ENCODE measurements at regions of chr16 and their contacts with region 1.

Region 1: DNA sequence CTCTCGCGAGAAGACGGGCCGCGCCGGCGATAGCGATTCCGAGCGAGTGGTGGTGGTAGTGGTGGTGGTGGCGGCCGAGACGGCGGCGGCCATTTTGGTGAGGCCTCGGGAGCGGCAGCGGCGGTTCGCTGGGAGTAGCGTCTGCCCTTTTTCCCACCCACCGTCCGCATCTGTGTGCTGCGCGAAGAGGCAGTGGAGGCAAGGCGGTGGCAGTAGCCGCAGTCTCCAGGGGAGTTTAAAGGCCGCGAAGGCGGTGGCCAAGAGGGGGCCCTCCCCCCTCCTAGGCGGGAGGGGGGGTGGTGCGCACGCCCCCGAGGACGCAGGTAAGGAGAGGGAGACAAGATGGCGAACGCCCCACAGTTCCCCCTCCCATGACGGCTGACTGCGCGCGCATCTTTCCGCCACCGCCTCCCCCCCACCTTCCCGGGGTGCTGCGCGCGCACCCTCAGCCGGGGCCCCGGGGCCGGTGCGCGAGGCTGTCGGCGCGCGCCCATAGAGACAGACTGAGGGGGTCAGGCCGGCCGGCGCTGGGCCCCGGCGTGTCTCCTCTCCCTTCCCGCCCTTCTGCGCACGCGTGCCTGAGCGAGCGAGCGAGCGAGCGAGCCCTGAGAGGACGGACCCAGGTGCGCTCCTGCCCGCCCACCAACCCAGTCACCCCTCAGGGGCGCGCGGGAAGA is 694 bp upstream of the SRCAP start:
- DNase-seq: peak; percentile 97 to 99
- ATAC-seq: peak; percentile 72 to 88 (median 75)
- H3K4me3 ChIP-seq: peak overlapping the region; percentile 89
- H3K4me3 Mint-ChIP-seq: peak overlapping the region; percentile 94
- H3K27ac ChIP-seq: peak overlapping the region; percentile 99
- H3K27ac Mint-ChIP-seq: peak overlapping the region; percentile 98 to 100
- H3K4me1 ChIP-seq: peaks cover 26% of the 10 kb centered on the region
- H3K4me1 Mint-ChIP-seq: peaks cover 36 to 46% of the 10 kb centered on the region in 2 donors
- H3K27me3 ChIP-seq: no peaks in the 10 kb centered on the region
- H3K27me3 Mint-ChIP-seq: no peaks in the 10 kb centered on the region
- CTCF ChIP-seq: no peak

Region 2: DNA sequence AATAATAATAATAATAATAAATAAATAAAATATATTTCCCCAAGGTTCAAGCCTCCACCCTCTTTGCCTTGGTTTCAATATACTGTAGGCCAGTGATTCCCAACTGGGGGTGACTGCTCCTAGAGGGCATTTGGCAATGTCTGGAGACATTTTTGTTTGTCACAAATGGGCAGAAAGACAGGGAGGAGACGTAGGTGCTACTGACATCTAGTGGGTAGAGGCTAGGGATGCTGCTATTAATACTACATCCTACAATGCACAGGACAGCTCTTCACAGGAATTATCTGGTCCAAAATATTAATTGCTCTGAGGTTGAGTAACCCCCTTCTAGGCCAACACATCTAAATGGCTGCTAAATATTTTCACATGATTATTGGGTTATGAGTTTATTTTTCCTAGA is 60.3 kb before region 1 on chr16:
- intact Hi-C with region 1: loop called (anchors 10 kb)
- DNase-seq: peak in 1 of 2 donors; percentile 70
- ATAC-seq: no peak
- H3K4me3 ChIP-seq: no peak overlapping the region
- H3K4me3 Mint-ChIP-seq: no peak overlapping the region
- H3K27ac ChIP-seq: no peak overlapping the region
- H3K27ac Mint-ChIP-seq: no peak overlapping the region
- H3K4me1 ChIP-seq: peaks cover 17% of the 10 kb centered on the region
- H3K4me1 Mint-ChIP-seq: peaks cover 0 to 17% of the 10 kb centered on the region in 2 donors
- H3K27me3 ChIP-seq: no peaks in the 10 kb centered on the region
- H3K27me3 Mint-ChIP-seq: no peaks in the 10 kb centered on the region
- CTCF ChIP-seq: no peak

Region 3: DNA sequence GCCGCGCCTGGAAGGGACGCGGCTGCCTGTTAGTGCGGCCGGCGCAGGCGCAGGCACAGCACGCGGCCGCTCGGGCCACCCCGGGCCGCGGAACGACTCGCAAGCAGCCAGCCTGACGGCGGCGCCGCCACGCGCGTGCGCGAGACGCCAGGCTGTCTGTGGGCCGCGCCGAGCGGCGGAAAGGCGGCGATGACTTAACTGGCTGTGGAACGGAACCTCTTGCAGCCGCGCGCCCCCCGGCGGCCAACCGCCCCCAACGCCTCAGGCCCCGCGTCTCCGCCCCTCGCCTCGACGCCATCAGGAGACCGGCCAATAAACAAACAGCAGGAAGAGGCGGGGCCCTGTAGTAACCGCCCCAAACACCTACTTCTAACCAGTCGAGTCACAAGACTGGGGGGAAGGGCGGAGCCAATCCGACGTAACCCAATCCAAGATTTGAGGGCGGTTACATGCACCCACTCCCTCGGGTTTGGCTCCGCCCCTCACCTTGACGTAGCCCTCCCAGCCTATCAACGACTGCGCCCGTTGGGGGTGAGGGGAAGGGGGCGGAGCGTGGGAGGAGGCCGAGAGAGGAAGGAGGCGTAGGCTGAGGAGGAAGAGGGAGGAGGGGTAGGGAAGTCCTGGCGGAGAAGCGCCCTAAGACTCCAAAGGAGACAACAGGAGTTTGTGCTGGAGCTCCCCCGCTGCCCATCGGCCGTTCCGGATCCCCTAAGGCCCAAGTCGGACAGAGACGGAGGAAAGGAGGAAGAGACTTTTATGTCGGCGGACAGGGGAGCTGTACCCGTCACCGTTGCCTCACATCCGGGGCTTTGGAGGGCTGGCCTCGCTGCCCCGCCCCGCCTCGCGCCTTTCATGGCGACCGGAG is 40.2 kb before region 1 on chr16 and contains the start of gene FBRS:
- intact Hi-C with region 1: loop called (anchors 1 kb)
- DNase-seq: peak; percentile 99 to 100
- ATAC-seq: peak; percentile 72 to 86 (median 74)
- H3K4me3 ChIP-seq: peak within 1 kb of the TSS; percentile 97
- H3K4me3 Mint-ChIP-seq: peak within 1 kb of the TSS; percentile 98
- H3K27ac ChIP-seq: peak within 1 kb of the TSS; percentile 99
- H3K27ac Mint-ChIP-seq: peak within 1 kb of the TSS; percentile 98 to 99
- H3K4me1 ChIP-seq: peaks cover 39% of the 10 kb centered on the region
- H3K4me1 Mint-ChIP-seq: peaks cover 38 to 52% of the 10 kb centered on the region in 2 donors
- H3K27me3 ChIP-seq: no peaks in the 10 kb centered on the region
- H3K27me3 Mint-ChIP-seq: no peaks in the 10 kb centered on the region
- CTCF ChIP-seq: peak; percentile 77
- total RNA-seq, gene FBRS: 158 to 182 (median 172) TPM

Region 4: GRCh38 chr16:30669896-30670797 is 28.1 kb before region 1 on chr16:
- intact Hi-C with region 1: no loop called
- DNase-seq: peak in 1 of 2 donors; percentile 17
- ATAC-seq: peak in 2 of 3 donors; percentile 7 to 22
- H3K4me3 ChIP-seq: no peak overlapping the region
- H3K4me3 Mint-ChIP-seq: no peak overlapping the region
- H3K27ac ChIP-seq: no peak overlapping the region
- H3K27ac Mint-ChIP-seq: peak overlapping the region in 1 of 2 donors; percentile 38
- H3K4me1 ChIP-seq: peaks cover 2% of the 10 kb centered on the region
- H3K4me1 Mint-ChIP-seq: peaks cover 4 to 7% of the 10 kb centered on the region in 2 donors
- H3K27me3 ChIP-seq: no peaks in the 10 kb centered on the region
- H3K27me3 Mint-ChIP-seq: no peaks in the 10 kb centered on the region
- CTCF ChIP-seq: no peak

Region 5: GRCh38 chr16:30797670-30798309 is 99.5 kb after region 1 on chr16:
- intact Hi-C with region 1: no loop called
- DNase-seq: no peak
- ATAC-seq: no peak
- H3K4me3 ChIP-seq: no peak overlapping the region
- H3K4me3 Mint-ChIP-seq: no peak overlapping the region
- H3K27ac ChIP-seq: no peak overlapping the region
- H3K27ac Mint-ChIP-seq: no peak overlapping the region
- H3K4me1 ChIP-seq: no peaks in the 10 kb centered on the region
- H3K4me1 Mint-ChIP-seq: no peaks in the 10 kb centered on the region
- H3K27me3 ChIP-seq: no peaks in the 10 kb centered on the region
- H3K27me3 Mint-ChIP-seq: no peaks in the 10 kb centered on the region
- CTCF ChIP-seq: no peak

Measured in natural killer cell (primary cell).